Activated CD4-positive, alpha-beta memory T cell treated with anti-CD3 and anti-CD28 coated beads, Interleukin-2, amount 10 ng/mL, durations not matched to agents 7 days and 5 days (primary cell): ENCODE measurements at regions of chr1 and their contacts with region 1.

Region 1: GRCh38 chr1:226186124-226187018 is at the start of gene ACBD3:
- DNase-seq: peak; percentile 89
- H3K4me3 Mint-ChIP-seq: peak within 1 kb of the TSS; percentile 96
- H3K27ac Mint-ChIP-seq: peak within 1 kb of the TSS; percentile 90
- H3K4me1 Mint-ChIP-seq: peaks cover 29% of the 10 kb centered on the region
- H3K27me3 Mint-ChIP-seq: no peaks in the 10 kb centered on the region
- total RNA-seq, gene ACBD3: 22.5 to 24.6 TPM

Region 2: DNA sequence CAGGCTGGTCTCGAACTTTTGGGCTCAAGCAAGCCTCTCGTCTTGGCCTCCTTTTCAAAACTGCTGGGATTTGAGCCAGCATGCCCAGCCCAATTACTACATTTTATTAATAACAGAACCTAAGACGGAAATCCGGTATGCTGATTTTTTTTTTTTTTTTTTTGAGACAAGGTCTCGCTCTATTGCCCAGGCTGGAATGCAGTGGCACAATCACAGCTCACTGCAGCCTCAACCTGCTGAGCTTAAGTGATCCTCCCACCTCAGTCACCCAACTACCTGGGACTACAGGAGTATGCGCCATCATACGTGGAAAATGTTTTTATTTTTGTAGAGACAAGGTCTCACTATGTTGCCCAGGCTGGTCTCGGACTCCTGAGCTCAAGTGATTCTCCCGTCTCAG is 20.0 kb before region 1 on chr1:
- CTCF ChIA-PET with region 1: no interaction called
- POLR2A ChIA-PET with region 1: no interaction called
- DNase-seq: no peak
- H3K4me3 Mint-ChIP-seq: no peak overlapping the region
- H3K27ac Mint-ChIP-seq: no peak overlapping the region
- H3K4me1 Mint-ChIP-seq: no peaks in the 10 kb centered on the region
- H3K27me3 Mint-ChIP-seq: no peaks in the 10 kb centered on the region

Region 3: DNA sequence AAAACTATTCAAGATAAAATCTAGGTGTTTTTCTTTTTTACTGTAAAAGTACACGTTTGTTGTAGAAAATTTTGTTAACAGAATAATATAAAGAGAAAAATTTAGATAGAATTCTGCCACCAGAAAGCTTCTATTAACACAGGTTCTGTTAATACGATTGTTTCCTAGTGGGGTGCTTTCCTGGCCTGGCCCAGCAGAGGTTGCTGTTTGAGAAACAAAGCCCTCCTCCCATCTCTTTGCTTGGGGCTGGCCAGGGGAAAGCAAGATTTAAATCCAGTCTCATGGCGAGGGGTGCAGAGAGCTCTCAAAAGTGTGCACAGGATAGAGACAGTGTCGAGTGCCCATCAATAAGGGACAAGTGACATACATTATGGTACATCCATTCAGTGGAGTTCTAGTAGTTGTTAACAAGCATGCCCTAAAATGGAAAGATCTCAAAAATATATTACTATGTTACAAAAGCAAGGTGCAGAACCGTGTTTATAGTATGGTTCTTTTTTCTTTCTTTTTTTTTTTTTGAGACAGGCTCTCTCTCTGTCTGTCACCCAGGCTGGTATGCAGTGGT is 14.7 kb after region 1 on chr1:
- CTCF ChIA-PET with region 1: interaction called, 18 read pairs
- POLR2A ChIA-PET with region 1: interaction called, 5 read pairs
- DNase-seq: no peak
- H3K4me3 Mint-ChIP-seq: no peak overlapping the region
- H3K27ac Mint-ChIP-seq: no peak overlapping the region
- H3K4me1 Mint-ChIP-seq: peaks cover 3% of the 10 kb centered on the region
- H3K27me3 Mint-ChIP-seq: peaks cover 12% of the 10 kb centered on the region